ENCODE measurements at regions of chr1 and their contacts with region 1.

Region 1: GRCh38 chr1:86704458-86704971 is at the start of gene SH3GLB1:
- DNase-seq: peak; percentile 99
- H3K4me3 ChIP-seq: peak within 1 kb of the TSS; percentile 54 to 88 (median 77)
- H3K27ac ChIP-seq: peak within 1 kb of the TSS; percentile 96 to 99 (median 98)
- H3K4me1 ChIP-seq: peaks cover 17 to 57% (median 49%) of the 10 kb centered on the region in 6 donors
- H3K27me3 ChIP-seq: no peaks in the 10 kb centered on the region
- CTCF ChIP-seq: peak; percentile 88 to 100 (median 98)
- POLR2A ChIP-seq: peak in 1 of 3 donors; percentile 42
- total RNA-seq, gene SH3GLB1: 82.7 to 122 (median 88.9) TPM

Region 2: GRCh38 chr1:86395771-86396497 is 308.6 kb before region 1 on chr1 and contains the start of gene ODF2L:
- intact Hi-C with region 1: loop called (anchors 10 kb)
- DNase-seq: peak; percentile 99
- H3K4me3 ChIP-seq: peak within 1 kb of the TSS; percentile 71 to 96 (median 93)
- H3K27ac ChIP-seq: peak within 1 kb of the TSS; percentile 10 to 94 (median 90)
- H3K4me1 ChIP-seq: peaks cover 5 to 57% (median 33%) of the 10 kb centered on the region in 6 donors
- H3K27me3 ChIP-seq: no peaks in the 10 kb centered on the region
- CTCF ChIP-seq: peak in 1 of 11 experiments; percentile 7
- POLR2A ChIP-seq: peak in 2 of 3 donors; percentile 56 to 67
- total RNA-seq, gene ODF2L: 57.3 to 132 (median 87.5) TPM